SK-N-SH (cell line): ENCODE measurements at regions of chr6 and their contacts with region 1.

Region 1: GRCh38 chr6:24359640-24360454 is 2.0 kb upstream of the DCDC2 start:
- DNase-seq: peak; percentile 88
- H3K4me3 ChIP-seq: peak overlapping the region; percentile 54 to 74
- H3K27ac ChIP-seq: peak overlapping the region in 1 of 2 experiments; percentile 28; a peak in 1 of 4 replicates
- H3K4me1 ChIP-seq: peaks cover 0 to 4% of the 10 kb centered on the region in 2 experiments; a peak in 2 of 4 replicates
- H3K27me3 ChIP-seq: no peaks in the 10 kb centered on the region
- CTCF ChIP-seq: peak; percentile 86
- EP300 ChIP-seq: no peak
- RAD21 ChIP-seq: peak; percentile 45

Region 2: GRCh38 chr6:24376866-24377265 is 17.0 kb after region 1 on chr6:
- CTCF ChIA-PET with region 1: interaction called, 15 read pairs
- POLR2A ChIA-PET with region 1: no interaction called
- DNase-seq: peak; percentile 36
- H3K4me3 ChIP-seq: no peak overlapping the region
- H3K27ac ChIP-seq: no peak overlapping the region
- H3K4me1 ChIP-seq: peaks cover 0 to 2% of the 10 kb centered on the region in 2 experiments; a peak in 2 of 4 replicates
- H3K27me3 ChIP-seq: no peaks in the 10 kb centered on the region
- CTCF ChIP-seq: no peak
- EP300 ChIP-seq: no peak
- RAD21 ChIP-seq: no peak

Region 3: GRCh38 chr6:24385536-24386269 is 25.9 kb after region 1 on chr6:
- CTCF ChIA-PET with region 1: interaction called, 10 read pairs
- POLR2A ChIA-PET with region 1: no interaction called
- DNase-seq: no peak
- H3K4me3 ChIP-seq: no peak overlapping the region
- H3K27ac ChIP-seq: no peak overlapping the region
- H3K4me1 ChIP-seq: no peaks in the 10 kb centered on the region; a peak in 1 of 4 replicates
- H3K27me3 ChIP-seq: no peaks in the 10 kb centered on the region
- CTCF ChIP-seq: no peak
- EP300 ChIP-seq: no peak
- RAD21 ChIP-seq: no peak